MCF 10A (cell line): ENCODE measurements at regions of chr14 and their contacts with region 1.

Region 1: GRCh38 chr14:103528587-103529382 is at the start of gene TRMT61A:
- DNase-seq: peak; percentile 90
- H3K4me3 Mint-ChIP-seq: peak within 1 kb of the TSS; percentile 90
- H3K27ac Mint-ChIP-seq: peak within 1 kb of the TSS; percentile 96
- H3K4me1 Mint-ChIP-seq: peaks cover 8% of the 10 kb centered on the region
- H3K27me3 Mint-ChIP-seq: no peaks in the 10 kb centered on the region
- CTCF ChIP-seq: no peak
- total RNA-seq, gene TRMT61A: 10.2 and 15.8 TPM in 2 replicates

Region 2: GRCh38 chr14:103220134-103220981 is 308.4 kb before region 1 on chr14:
- CTCF ChIA-PET with region 1: no interaction called
- POLR2A ChIA-PET with region 1: no interaction called
- intact Hi-C with region 1: no loop called
- DNase-seq: no peak
- H3K4me3 Mint-ChIP-seq: no peak overlapping the region
- H3K27ac Mint-ChIP-seq: no peak overlapping the region
- H3K4me1 Mint-ChIP-seq: no peaks in the 10 kb centered on the region
- H3K27me3 Mint-ChIP-seq: no peaks in the 10 kb centered on the region
- CTCF ChIP-seq: no peak

Region 3: GRCh38 chr14:103512701-103513611 is 15.8 kb before region 1 on chr14:
- CTCF ChIA-PET with region 1: interaction called, 21 read pairs
- POLR2A ChIA-PET with region 1: interaction called, 32 read pairs
- intact Hi-C with region 1: no loop called
- DNase-seq: peak; percentile 89
- H3K4me3 Mint-ChIP-seq: peak overlapping the region; percentile 55
- H3K27ac Mint-ChIP-seq: peak overlapping the region; percentile 84
- H3K4me1 Mint-ChIP-seq: peaks cover 19% of the 10 kb centered on the region
- H3K27me3 Mint-ChIP-seq: no peaks in the 10 kb centered on the region
- CTCF ChIP-seq: no peak

Region 4: GRCh38 chr14:103539056-103539825 is 10.5 kb after region 1 on chr14:
- CTCF ChIA-PET with region 1: interaction called, 6 read pairs
- POLR2A ChIA-PET with region 1: interaction called, 61 read pairs
- intact Hi-C with region 1: no loop called
- DNase-seq: no peak
- H3K4me3 Mint-ChIP-seq: no peak overlapping the region
- H3K27ac Mint-ChIP-seq: no peak overlapping the region
- H3K4me1 Mint-ChIP-seq: peaks cover 13% of the 10 kb centered on the region
- H3K27me3 Mint-ChIP-seq: no peaks in the 10 kb centered on the region
- CTCF ChIP-seq: no peak

Region 5: DNA sequence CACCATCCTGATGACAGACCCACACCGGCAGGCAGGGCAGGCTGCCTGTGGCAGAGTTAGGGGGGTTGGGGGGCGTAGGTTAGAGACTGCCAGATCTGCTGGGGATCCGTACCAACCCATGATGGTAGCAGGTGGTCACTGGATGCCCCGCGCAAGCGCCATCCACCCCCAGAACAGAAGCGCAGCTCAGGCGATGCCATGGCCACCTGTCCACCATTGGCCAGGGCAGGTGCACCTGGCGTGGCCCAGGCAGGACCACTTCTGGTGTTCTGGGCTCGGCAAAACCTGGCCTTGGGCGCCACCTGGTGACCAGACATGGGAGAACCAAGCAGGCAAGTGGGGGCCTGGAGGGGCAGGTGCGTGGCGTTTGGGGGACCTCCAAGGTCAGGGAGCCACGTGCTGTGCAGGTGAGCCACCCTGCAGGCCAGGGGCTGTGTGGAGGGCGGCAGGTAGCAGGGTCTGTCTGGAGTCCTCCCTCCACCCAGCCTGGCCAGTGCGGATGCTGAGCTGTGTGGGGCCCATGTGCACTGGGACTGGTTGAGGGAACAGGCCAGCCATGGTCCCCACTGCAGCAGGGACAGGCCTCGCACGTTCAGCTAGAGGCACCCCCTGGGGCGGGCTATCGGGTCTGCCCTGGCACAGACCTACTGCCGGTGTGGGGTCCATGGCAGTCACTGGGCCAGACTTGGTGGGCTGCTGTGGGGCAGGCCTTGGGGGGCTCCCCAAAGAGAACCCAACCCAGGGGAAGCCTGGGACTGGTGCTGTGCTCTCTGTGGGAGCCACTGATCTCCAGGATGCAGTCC is 18.1 kb after region 1 on chr14:
- CTCF ChIA-PET with region 1: interaction called, 34 read pairs
- POLR2A ChIA-PET with region 1: interaction called, 61 read pairs
- intact Hi-C with region 1: no loop called
- DNase-seq: peak; percentile 67
- H3K4me3 Mint-ChIP-seq: no peak overlapping the region
- H3K27ac Mint-ChIP-seq: no peak overlapping the region
- H3K4me1 Mint-ChIP-seq: peaks cover 6% of the 10 kb centered on the region
- H3K27me3 Mint-ChIP-seq: no peaks in the 10 kb centered on the region
- CTCF ChIP-seq: peak; percentile 98

Region 6: GRCh38 chr14:103552011-103552845 is 23.4 kb after region 1 on chr14:
- CTCF ChIA-PET with region 1: interaction called, 34 read pairs
- POLR2A ChIA-PET with region 1: interaction called, 19 read pairs
- intact Hi-C with region 1: no loop called
- DNase-seq: peak; percentile 75
- H3K4me3 Mint-ChIP-seq: peak overlapping the region; percentile 54
- H3K27ac Mint-ChIP-seq: peak overlapping the region; percentile 40
- H3K4me1 Mint-ChIP-seq: peaks cover 23% of the 10 kb centered on the region
- H3K27me3 Mint-ChIP-seq: no peaks in the 10 kb centered on the region
- CTCF ChIP-seq: no peak